Right ventricle myocardium superior (tissue), 1 donor: ENCODE measurements at regions of chr1 and their contacts with region 1.

Region 1: DNA sequence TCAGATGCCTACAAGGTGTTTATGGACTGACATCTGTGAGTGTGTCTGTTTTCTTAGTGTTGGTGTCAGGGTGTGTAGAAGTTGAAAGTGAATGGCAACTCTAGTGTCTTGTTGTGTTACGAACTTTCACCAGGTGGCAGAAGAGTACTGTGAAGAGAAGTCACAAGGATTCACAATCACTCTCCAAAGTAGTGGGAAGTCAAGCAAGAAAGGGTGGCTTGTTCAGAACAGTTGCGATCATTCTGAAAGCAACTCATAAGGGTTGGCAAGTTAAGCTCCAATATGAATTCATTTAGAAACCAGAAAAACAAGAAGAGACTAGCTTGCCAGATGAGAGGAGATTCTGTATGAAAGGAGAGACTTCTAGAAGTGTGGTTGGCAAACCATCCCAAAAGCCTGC is 86.1 kb downstream of the FASLG start:
- DNase-seq: no peak
- ATAC-seq: peak; percentile 89

Region 2: DNA sequence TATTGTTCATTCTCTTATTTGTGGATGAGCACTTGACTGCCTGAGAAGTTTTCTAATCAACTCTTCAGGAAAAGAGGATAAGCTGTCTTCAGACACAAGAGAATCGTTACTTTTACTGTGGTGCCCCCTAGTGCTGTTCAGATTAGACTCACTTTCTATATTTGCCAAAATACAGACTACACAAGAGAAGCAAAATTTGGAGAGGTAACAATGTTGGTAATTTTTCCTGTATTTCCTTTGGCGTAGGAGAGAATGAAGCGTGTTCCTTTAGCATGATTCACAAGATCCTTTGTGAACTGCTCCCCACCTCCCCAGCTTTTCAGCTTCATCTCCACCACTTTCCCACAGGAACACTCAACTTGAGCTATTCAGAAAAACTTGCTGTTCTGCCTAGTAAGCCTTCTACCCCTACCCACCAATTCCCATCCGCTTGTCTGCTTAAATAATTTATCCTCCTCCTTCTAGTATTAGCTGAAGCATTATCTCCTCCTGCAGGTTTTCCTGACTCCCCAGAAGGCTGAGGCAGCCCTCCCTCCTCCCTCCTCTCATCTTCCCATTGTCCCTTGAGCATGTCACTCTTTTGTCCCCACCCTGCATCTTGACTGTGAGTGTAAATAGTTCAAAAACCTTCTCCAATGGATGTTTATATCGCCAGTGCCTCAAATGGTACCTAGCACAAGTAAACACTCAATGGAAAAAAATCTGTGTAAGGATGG is 457.6 kb after region 1 on chr1:
- intact Hi-C with region 1: loop called (anchors 5 kb)
- DNase-seq: no peak
- ATAC-seq: peak; percentile 74

Region 3: DNA sequence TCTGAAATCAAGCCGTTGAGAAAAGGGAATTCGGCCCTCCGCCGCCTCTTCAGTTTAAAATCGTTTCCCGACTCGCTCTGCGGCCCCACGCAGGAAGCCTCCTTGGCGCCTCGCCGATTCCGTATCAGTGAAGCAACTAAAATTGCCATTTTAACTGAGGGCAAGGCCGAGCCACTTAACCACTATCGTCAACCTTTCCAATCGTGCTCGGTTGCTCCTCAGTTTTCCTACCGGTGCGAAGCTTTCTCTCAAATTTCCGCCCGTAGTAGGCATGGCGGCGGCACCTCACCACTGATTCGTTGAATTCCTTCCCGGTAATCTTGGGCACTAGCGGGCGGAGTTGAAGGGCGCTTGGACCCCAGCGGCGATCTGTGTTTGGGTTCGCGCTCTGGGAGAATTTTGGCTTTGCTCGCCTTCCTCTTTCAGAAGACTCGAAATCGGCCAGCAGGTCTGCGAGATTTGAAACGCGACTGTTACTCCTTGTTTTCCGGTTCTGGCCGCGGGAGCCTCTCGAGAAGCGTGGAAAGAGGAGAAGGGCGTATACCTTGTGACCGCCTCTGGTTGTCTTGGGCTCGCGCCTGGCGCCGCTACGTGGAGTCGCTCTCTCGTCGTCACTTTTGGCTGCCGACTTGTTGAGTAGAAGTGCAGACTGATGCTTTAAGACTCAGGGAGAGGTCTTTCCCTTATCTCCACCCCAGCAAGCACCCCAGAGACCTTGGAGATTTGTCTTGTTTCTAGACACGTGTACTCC is 1079.5 kb after region 1 on chr1 and contains the starts of genes CENPL and DARS2:
- intact Hi-C with region 1: loop called (anchors 10 kb)
- DNase-seq: peak; percentile 97
- ATAC-seq: peak; percentile 98
- total RNA-seq, gene CENPL: 2.6 TPM
- total RNA-seq, gene DARS2: 12.9 TPM